Dorsolateral prefrontal cortex (tissue), 120 donors: ENCODE measurements at regions of chr19 and their contacts with region 1.

Region 1: DNA sequence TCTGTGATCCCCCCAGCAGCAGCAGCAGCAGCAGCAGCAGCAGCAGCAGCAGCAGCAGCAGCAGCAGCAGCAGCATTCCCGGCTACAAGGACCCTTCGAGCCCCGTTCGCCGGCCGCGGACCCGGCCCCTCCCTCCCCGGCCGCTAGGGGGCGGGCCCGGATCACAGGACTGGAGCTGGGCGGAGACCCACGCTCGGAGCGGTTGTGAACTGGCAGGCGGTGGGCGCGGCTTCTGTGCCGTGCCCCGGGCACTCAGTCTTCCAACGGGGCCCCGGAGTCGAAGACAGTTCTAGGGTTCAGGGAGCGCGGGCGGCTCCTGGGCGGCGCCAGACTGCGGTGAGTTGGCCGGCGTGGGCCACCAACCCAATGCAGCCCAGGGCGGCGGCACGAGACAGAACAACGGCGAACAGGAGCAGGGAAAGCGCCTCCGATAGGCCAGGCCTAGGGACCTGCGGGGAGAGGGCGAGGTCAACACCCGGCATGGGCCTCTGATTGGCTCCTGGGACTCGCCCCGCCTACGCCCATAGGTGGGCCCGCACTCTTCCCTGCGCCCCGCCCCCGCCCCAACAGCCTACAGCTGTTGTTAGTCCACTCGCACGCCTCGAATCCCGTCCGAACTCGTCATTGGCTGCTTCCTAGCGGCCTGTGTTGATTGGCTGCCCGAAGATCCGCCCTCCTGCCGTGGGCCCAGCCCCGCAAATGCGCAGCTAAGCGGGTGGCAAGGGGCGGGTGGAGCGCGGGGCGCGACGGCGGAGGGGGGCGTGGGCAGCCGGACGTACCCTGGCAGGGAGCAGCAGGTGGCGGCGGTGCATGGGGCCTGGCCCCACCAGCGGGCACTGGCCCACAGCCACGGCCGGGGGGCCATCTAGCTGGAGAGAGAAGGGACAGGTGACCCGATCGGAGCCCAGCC is 1.4 kb upstream of the SIX5 start:
- DNase-seq: peak; percentile 73 to 95 (median 92)
- H3K4me3 ChIP-seq: peak overlapping the region; percentile 43 to 79 (median 68)
- H3K27ac ChIP-seq: peak overlapping the region; percentile 71 to 97 (median 93)
- H3K27me3 ChIP-seq: peaks cover 0 to 26% (median 3%) of the 10 kb centered on the region in 45 donors
- CTCF ChIP-seq: peak; percentile 80 to 99 (median 93)

Region 2: DNA sequence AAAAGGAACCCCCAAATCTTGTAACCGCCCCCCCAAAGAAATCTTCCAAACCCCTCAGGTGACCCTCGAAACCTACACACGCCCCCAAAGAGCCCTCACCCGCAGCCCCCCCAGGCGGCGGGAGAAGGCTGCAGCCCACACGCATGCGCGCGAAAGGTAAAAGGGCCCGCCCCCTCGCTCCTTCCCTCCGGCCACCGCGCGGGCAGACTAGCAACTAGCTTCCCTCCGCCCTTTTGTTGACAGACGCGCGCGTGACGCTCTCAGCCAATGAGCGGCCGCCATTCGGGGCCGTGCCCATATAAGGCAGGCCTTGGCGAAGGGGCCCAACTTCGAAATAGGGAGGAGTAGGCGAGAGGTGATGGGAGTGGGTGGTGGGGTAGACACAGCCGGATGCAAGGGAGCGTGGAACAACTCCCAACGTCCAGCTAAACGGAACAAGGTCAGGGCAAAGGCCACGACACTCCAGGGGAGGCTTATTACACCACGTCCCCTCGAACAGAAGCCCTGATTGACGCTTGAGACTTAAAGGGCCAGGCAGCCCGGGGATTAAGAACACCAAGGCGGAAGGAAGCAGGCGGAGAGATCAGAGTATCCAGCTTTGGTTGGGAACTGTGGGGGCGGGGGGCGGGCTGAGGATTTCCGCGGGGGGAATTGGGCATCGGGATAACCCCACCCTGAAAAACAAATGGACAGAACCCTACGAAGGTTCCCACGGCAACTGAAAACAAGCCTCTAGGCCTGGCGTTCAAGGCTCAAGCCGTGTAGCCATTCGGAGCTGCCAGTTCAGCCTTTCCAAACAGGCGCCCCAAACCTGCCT is 53.1 kb before region 1 on chr19:
- intact Hi-C with region 1: loop called (anchors 1 to 2 kb)
- DNase-seq: peak; percentile 98 to 100 (median 99)
- H3K4me3 ChIP-seq: peak overlapping the region; percentile 44 to 82 (median 70)
- H3K27ac ChIP-seq: peak overlapping the region; percentile 72 to 98 (median 93)
- H3K27me3 ChIP-seq: no peaks in the 10 kb centered on the region
- CTCF ChIP-seq: peak in 36 of 56 donors; percentile 7 to 49 (median 30)

Region 3: DNA sequence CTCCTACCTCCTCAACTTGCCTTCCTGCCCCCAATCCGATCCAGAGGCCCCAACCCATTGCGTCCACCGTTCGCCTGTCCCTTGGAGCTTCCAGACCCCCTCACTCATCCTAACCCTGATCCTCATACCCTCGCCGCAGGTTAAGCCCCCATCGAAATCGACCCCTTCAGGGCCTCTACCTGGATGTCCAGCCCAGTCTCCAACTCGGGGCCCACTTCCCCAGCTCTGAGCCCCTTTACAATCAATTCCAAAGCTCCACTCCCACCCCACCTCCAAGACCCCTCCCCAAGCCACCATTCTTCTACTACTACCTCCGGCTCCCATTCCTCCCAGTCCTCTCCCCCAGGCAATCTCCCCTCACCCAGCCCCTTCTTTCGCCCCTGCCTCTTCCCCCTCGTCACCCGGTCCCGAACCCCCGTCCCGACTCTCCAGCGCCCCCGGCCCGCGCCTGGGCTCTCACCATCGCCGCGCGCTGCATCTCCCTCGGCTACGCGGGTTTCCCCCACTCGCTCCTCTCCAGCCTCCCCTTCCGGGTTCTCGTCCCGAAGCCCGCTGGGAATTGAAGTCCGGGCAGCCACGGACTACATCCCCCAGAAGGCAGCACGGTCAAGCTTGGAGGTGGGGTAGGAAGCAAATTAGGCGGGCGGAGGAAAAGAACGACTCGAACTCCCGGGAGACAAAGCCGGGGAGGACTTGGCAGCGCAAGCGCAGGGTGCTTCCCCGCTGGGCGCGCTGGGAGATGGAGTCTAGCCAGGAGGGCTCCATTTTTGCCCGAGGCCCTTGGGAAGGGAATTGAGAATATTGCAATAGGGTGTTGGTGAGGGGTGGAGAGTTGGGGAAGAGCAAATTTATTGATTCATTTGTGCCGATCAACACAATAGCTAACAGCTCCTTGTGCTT is 39.8 kb before region 1 on chr19 and contains the start of gene FBXO46:
- intact Hi-C with region 1: loop called (anchors 1 to 5 kb)
- DNase-seq: peak; percentile 93 to 99 (median 98)
- H3K4me3 ChIP-seq: peak within 1 kb of the TSS; percentile 58 to 93 (median 79)
- H3K27ac ChIP-seq: peak within 1 kb of the TSS in 55 of 59 donors; percentile 33 to 90 (median 79)
- H3K27me3 ChIP-seq: no peaks in the 10 kb centered on the region
- CTCF ChIP-seq: peak in 24 of 56 donors; percentile 3 to 61 (median 28)
- total RNA-seq, gene FBXO46: 9.1 to 29.5 (median 17.4) TPM

Region 4: GRCh38 chr19:45792470-45793177 is 22.2 kb after region 1 on chr19 and contains the start of gene DMWD:
- intact Hi-C with region 1: loop called in 1 of 2 experiments (anchors 2 kb)
- DNase-seq: peak; percentile 99 to 100 (median 100)
- H3K4me3 ChIP-seq: peak within 1 kb of the TSS; percentile 55 to 87 (median 72)
- H3K27ac ChIP-seq: peak within 1 kb of the TSS in 44 of 59 donors; percentile 4 to 86 (median 66)
- H3K27me3 ChIP-seq: no peaks in the 10 kb centered on the region
- CTCF ChIP-seq: peak in 9 of 56 donors; percentile 7 to 46 (median 22)
- total RNA-seq, gene DMWD: 58.7 to 138 (median 86.8) TPM

Region 5: DNA sequence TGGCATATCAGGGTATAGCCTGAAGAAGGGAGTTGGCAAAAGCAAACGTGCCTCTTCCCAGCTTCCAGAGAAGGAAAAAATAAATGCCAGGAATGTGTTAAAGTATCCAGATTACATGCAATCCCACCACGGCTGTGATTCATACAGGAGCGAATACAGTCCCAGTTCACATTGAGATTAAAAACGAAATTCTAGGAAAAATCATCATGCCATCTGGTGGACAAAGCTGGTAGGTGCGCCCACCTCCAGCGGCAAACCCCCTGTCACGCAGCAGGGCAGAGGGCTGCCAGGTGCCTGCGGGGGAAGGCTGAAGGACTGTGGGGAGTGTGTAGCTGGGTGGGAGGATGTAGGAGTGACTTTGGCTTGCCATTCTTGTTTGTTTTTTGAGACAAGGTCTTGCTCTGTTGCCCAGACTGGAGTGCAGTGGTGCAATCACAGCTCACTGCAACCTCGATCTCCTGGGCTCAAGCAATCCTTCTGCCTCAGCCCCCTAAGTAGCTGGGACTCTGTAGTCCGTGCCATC is 28.6 kb after region 1 on chr19:
- intact Hi-C with region 1: loop called in 1 of 2 experiments (anchors 2 kb)
- DNase-seq: peak in 6 of 10 donors; percentile 31 to 66 (median 54)
- H3K4me3 ChIP-seq: peak overlapping the region in 14 of 59 donors; percentile 10 to 37 (median 22)
- H3K27ac ChIP-seq: peak overlapping the region in 5 of 59 donors; percentile 9 to 35 (median 16)
- H3K27me3 ChIP-seq: no peaks in the 10 kb centered on the region
- CTCF ChIP-seq: peak; percentile 78 to 97 (median 92)